ENCODE measurements at regions of chr6 and their contacts with region 1.

Region 1: DNA sequence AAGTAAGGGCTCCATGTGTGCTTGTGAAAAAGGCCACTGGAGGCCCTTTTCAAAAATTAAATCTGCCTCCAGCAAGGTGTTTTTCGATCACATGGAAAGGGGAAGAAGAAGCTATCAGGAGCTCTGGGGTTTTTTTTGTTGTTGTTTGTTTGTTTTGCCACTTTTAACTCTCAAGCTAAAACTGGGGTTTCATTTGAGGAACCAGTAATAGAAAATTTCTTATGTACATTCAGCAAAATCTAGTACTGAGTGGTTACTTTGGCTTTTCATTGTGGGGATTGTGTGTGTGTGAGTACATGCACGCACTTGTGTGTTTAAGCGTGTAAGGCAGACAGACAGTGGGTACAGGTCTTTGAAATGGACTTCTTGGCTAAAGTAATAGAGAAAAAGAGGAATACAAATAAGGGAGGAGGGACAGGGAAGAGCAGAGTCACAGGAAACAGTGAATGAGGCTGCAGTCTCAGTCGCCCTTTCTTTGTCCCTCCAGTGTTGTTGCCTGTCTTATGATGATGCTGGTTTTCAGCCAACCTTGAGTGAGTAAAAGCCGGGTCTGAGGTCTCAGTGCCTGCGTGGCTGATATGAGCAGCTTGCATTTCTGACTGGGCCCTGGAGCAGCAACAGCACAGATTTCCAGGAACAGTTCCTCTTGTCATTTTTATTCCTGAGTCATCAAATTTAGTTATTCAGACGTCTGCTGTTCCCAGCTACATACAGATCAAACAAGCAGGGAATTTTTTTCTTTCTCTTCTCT is 26.2 kb downstream of the SLC16A10 start:
- DNase-seq: peak; percentile 64
- H3K4me3 Mint-ChIP-seq: no peak overlapping the region
- H3K27ac Mint-ChIP-seq: peak overlapping the region; percentile 51
- H3K4me1 Mint-ChIP-seq: peaks cover 10% of the 10 kb centered on the region
- H3K27me3 Mint-ChIP-seq: no peaks in the 10 kb centered on the region

Region 2: GRCh38 chr6:111061508-111061907 is 52.0 kb before region 1 on chr6:
- intact Hi-C with region 1: no loop called
- DNase-seq: no peak
- H3K4me3 Mint-ChIP-seq: no peak overlapping the region
- H3K27ac Mint-ChIP-seq: no peak overlapping the region
- H3K4me1 Mint-ChIP-seq: peaks cover 2% of the 10 kb centered on the region
- H3K27me3 Mint-ChIP-seq: peaks cover 13% of the 10 kb centered on the region

Region 3: DNA sequence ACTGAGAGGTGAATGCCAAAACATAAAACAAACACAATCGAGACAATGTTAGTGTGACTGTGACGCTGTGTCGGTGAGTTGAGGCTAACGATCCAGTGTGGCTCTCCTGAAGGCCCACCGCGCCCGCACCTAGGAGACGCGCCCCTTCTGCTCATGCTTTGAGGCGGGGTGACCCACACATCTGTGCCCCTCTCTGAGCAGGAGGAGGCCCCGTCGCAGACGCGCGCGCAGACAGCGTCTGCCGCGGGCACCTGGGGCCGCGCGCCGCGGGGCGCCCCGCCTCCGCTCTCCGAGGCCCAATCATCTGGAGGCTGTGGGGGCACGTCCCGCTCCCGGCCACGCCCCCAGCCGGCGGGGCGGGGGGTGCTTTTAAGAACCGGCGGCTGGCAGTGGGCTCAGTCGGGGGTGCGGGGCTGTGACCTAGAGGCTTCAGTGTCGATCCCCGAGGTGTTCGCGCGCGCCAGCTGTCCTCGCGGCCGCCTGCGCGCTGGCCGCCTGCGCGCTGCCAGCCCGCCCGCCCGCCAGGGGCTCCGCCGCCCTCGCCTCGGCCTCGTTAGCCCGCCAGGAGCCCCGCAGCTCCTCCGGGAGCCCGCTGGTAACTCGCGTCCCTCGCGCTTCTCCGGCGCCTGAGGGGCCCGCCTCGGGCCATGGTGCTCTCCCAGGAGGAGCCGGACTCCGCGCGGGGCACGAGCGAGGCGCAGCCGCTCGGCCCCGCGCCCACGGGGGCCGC is 26.2 kb before region 1 on chr6 and contains the start of gene SLC16A10:
- intact Hi-C with region 1: loop called (anchors 2 kb)
- DNase-seq: peak; percentile 93
- H3K4me3 Mint-ChIP-seq: peak within 1 kb of the TSS; percentile 90
- H3K27ac Mint-ChIP-seq: peak within 1 kb of the TSS; percentile 81
- H3K4me1 Mint-ChIP-seq: peaks cover 20% of the 10 kb centered on the region
- H3K27me3 Mint-ChIP-seq: peaks cover 21% of the 10 kb centered on the region
- total RNA-seq, gene SLC16A10: 4.2 and 5.1 TPM in 2 replicates

Region 4: DNA sequence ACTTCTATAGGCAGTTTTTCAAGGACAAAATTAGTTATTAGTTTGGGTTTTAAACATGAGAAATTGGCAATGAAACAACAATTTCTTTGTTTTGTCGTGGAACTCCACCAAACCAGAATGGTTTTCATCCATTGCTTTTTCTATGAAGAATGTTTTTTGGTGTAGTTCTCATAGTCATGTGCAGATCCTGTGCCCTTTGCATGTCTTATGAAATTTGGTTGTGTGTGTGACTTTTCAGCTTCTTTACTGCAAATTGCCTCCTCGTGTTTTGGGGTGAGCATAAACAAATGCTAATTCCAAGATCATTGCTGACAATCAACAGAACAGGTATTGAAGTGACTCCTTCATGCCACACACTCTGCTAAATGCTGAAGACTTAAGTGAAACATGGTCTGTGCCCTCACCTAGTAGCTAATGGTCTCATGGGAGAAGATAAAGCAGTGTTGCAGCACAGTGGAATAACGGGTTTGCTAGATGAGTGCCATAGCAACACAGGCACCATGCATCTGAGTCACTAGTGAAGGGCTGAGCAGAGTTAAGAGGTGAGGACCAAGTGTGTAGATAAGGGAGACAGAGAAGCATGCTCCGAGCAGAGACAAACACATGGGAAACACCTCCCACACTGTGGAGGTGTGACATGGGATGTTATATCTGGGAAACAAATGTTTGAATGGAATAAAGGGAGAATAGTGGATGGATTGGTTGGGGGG is 93.8 kb after region 1 on chr6:
- intact Hi-C with region 1: no loop called
- DNase-seq: no peak
- H3K4me3 Mint-ChIP-seq: no peak overlapping the region
- H3K27ac Mint-ChIP-seq: no peak overlapping the region
- H3K4me1 Mint-ChIP-seq: no peaks in the 10 kb centered on the region
- H3K27me3 Mint-ChIP-seq: no peaks in the 10 kb centered on the region